ENCODE measurements at regions of chr5 and their contacts with region 1.

Region 1: GRCh38 chr5:56909294-56910209 is at the start of gene SETD9:
- DNase-seq: peak; percentile 98
- H3K4me3 ChIP-seq: peak within 1 kb of the TSS; percentile 45 to 56
- H3K27ac ChIP-seq: peak within 1 kb of the TSS; percentile 90 to 94
- H3K4me1 ChIP-seq: no peaks in the 10 kb centered on the region
- H3K27me3 ChIP-seq: no peaks in the 10 kb centered on the region
- CTCF ChIP-seq: no peak
- POLR2A ChIP-seq: peak; percentile 56
- total RNA-seq, gene SETD9: 10.7 to 20.3 TPM

Region 2: GRCh38 chr5:56534032-56534829 is 375.3 kb before region 1 on chr5:
- intact Hi-C with region 1: no loop called
- DNase-seq: peak; percentile 66
- H3K4me3 ChIP-seq: no peak overlapping the region
- H3K27ac ChIP-seq: peak overlapping the region; percentile 10 to 51
- H3K4me1 ChIP-seq: no peaks in the 10 kb centered on the region
- H3K27me3 ChIP-seq: no peaks in the 10 kb centered on the region
- CTCF ChIP-seq: no peak
- POLR2A ChIP-seq: peak; percentile 4

Region 3: DNA sequence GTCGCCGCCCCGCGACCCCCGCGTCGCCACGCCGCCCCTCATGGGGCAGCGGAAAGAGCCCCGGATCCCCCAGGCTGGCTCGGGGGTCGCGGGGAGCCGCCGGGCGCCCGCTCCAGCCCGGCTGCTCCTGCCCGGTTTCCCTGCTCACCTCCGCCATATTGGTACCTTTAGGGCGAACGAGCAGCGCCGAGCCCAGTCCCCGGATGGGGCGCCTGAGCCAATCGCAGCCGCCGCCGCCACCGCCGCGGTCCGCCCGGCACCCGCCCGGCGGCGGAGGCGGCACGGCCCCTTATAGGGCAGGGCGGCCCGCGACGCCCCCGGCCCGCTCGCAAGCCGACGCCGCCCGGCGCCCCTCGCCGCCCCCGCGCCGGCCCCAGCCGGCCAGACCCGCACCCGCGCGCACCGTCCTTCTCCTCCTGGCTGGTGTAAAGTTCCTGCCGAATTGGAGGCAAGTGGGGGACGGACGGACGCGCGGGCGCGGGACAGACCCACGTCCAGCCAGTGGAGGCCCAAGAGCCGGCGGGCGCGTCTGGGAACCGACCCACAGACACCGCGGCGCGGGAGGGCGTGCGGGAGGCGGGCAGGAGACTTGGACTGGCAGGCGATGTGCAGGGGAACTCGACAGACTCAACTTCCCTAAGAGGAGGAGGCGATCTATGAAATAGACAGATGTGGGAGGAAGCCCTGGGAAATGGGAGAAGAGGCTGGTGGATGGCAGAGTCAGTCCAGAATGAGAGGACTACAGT is 42.6 kb after region 1 on chr5 and contains the start of gene MIER3:
- intact Hi-C with region 1: loop called (anchors 5 kb)
- DNase-seq: peak; percentile 69
- H3K4me3 ChIP-seq: peak within 1 kb of the TSS; percentile 78 to 83
- H3K27ac ChIP-seq: peak within 1 kb of the TSS; percentile 81 to 90
- H3K4me1 ChIP-seq: no peaks in the 10 kb centered on the region
- H3K27me3 ChIP-seq: no peaks in the 10 kb centered on the region
- CTCF ChIP-seq: no peak
- POLR2A ChIP-seq: peak; percentile 12
- total RNA-seq, gene MIER3: 35.8 to 40.6 TPM

Measured in prostate gland (tissue), 2 donors.